Activated CD4-positive, alpha-beta memory T cell treated with anti-CD3 and anti-CD28 coated beads for 36 hours (primary cell): ENCODE measurements at regions of chr17 and their contacts with region 1.

Region 1: GRCh38 chr17:40598663-40599467 is 33.6 kb upstream of the CCR7 start:
- DNase-seq: peak; percentile 91
- H3K4me3 Mint-ChIP-seq: peak overlapping the region; percentile 43
- H3K27ac Mint-ChIP-seq: peak overlapping the region; percentile 94
- H3K4me1 Mint-ChIP-seq: peaks cover 87% of the 10 kb centered on the region
- H3K27me3 Mint-ChIP-seq: no peaks in the 10 kb centered on the region

Region 2: GRCh38 chr17:40480501-40481003 is 118.3 kb before region 1 on chr17:
- CTCF ChIA-PET with region 1: no interaction called
- POLR2A ChIA-PET with region 1: no interaction called
- intact Hi-C with region 1: loop called (anchors 2 kb)
- DNase-seq: peak; percentile 95
- H3K4me3 Mint-ChIP-seq: peak overlapping the region; percentile 76
- H3K27ac Mint-ChIP-seq: peak overlapping the region; percentile 98
- H3K4me1 Mint-ChIP-seq: peaks cover 70% of the 10 kb centered on the region
- H3K27me3 Mint-ChIP-seq: no peaks in the 10 kb centered on the region

Region 3: DNA sequence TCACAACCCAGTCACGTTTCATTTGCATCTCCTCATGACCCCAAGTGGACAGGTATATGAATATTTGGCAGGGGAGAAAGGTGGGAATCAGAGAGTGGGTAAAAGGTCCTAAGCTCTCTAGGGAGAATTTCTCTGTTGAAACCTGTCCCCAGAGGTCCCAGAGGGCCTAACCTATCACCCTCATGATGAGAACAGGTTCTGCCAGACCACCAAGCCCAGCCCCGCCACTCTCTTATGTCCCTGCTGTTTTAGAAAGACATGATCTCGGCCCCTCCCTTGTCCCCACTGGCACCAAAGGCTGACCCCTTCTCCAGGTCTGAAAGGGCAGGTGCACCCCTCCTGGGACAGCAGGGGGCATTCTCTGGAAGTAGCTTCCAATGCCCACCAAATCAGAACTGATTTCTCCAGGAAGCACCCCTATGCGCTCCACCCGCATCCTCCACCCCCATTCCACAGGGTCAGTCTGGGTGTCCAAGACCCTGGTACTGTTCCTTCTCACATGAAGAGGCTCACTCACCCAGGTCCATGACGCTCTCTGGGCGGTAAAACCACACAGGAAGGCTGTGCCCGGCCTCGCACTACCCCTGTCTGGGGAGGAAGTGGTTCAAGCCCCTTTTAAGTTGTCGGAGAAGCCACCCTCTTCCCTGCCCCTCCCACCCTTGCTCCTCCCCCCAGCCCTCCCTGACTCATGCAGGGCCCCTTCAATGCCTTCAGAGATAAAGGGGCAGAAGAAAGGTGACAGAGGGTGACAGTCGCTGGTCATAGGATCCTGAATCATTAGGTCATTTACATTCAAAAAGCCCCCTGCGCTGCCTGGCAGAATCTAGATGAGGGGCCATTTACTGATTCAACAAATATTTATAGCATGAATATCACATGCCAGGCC is 33.7 kb before region 1 on chr17 and contains the start of gene CCR7:
- CTCF ChIA-PET with region 1: interaction called, 90 read pairs
- POLR2A ChIA-PET with region 1: interaction called, 166 read pairs
- intact Hi-C with region 1: loop called (anchors 1 kb)
- DNase-seq: peak; percentile 92
- H3K4me3 Mint-ChIP-seq: peak within 1 kb of the TSS; percentile 93
- H3K27ac Mint-ChIP-seq: peak within 1 kb of the TSS; percentile 96
- H3K4me1 Mint-ChIP-seq: peaks cover 60% of the 10 kb centered on the region
- H3K27me3 Mint-ChIP-seq: no peaks in the 10 kb centered on the region
- total RNA-seq, gene CCR7: 137 to 145 TPM

Region 4: GRCh38 chr17:40615295-40615988 is 16.6 kb after region 1 on chr17:
- CTCF ChIA-PET with region 1: interaction called, 28 read pairs
- POLR2A ChIA-PET with region 1: interaction called, 38 read pairs
- intact Hi-C with region 1: loop called (anchors 2 kb)
- DNase-seq: peak; percentile 57
- H3K4me3 Mint-ChIP-seq: peak overlapping the region; percentile 23
- H3K27ac Mint-ChIP-seq: peak overlapping the region; percentile 79
- H3K4me1 Mint-ChIP-seq: peaks cover 74% of the 10 kb centered on the region
- H3K27me3 Mint-ChIP-seq: no peaks in the 10 kb centered on the region

Region 5: DNA sequence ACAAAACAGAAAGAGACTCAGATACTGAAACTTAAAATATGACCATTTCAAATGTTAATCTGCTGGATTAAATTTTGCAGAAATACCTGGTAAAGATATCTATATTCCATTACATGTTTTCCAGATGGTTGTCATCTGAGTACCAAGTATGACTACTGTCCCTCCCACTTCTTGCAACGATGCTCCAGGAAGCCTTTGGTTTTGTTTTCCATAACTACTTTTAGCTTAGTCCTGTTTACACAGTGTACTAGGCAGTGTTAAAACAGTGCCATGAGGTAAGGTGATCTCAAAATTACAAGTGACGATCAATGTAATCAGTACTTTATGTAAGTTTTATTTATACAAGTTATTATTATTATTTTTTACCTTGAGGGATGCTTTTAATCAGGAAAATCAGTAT is 31.0 kb after region 1 on chr17:
- CTCF ChIA-PET with region 1: no interaction called
- POLR2A ChIA-PET with region 1: interaction called, 3 read pairs
- intact Hi-C with region 1: loop called (anchors 1 kb)
- DNase-seq: no peak
- H3K4me3 Mint-ChIP-seq: no peak overlapping the region
- H3K27ac Mint-ChIP-seq: peak overlapping the region; percentile 43
- H3K4me1 Mint-ChIP-seq: peaks cover 22% of the 10 kb centered on the region
- H3K27me3 Mint-ChIP-seq: no peaks in the 10 kb centered on the region